ENCODE measurements at regions of chr1 and their contacts with region 1.

Region 1: DNA sequence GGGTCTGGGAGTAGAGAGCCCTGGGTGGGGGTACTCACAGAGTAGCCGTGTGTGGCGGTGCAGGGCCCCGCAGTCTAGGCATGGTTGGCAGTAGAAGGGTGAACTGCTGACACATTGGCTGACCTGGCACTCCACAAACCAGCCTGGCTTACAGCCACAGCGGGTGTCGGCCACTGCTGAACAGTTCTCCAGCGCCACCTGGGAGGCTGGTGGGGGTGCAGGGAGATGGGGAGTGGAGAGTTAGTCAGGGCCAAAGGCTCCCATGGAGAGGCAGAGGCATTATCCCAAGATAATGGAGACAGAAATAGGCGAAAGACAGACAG is 1.5 kb downstream of the TNFRSF25 start:
- DNase-seq: peak in 11 of 14 experiments; percentile 26 to 75 (median 58)
- ATAC-seq: no peak
- H3K4me3 ChIP-seq: peak overlapping the region; percentile 83
- H3K4me3 Mint-ChIP-seq: peak overlapping the region; percentile 98
- H3K27ac ChIP-seq: peak overlapping the region; percentile 90 to 97
- H3K27ac Mint-ChIP-seq: peak overlapping the region; percentile 96
- H3K4me1 ChIP-seq: peaks cover 68% of the 10 kb centered on the region
- H3K4me1 Mint-ChIP-seq: peaks cover 61% of the 10 kb centered on the region
- H3K27me3 ChIP-seq: no peaks in the 10 kb centered on the region
- H3K27me3 Mint-ChIP-seq: no peaks in the 10 kb centered on the region
- CTCF ChIP-seq: no peak

Region 2: GRCh38 chr1:5819391-5820025 is 645.0 kb before region 1 on chr1:
- CTCF ChIA-PET with region 1: no interaction called
- POLR2A ChIA-PET with region 1: no interaction called
- intact Hi-C with region 1: no loop called
- DNase-seq: no peak
- ATAC-seq: no peak
- H3K4me3 ChIP-seq: no peak overlapping the region
- H3K4me3 Mint-ChIP-seq: no peak overlapping the region
- H3K27ac ChIP-seq: no peak overlapping the region
- H3K27ac Mint-ChIP-seq: no peak overlapping the region
- H3K4me1 ChIP-seq: no peaks in the 10 kb centered on the region
- H3K4me1 Mint-ChIP-seq: no peaks in the 10 kb centered on the region
- H3K27me3 ChIP-seq: peaks cover 3 to 5% of the 10 kb centered on the region in 2 experiments
- H3K27me3 Mint-ChIP-seq: peaks cover 48% of the 10 kb centered on the region
- CTCF ChIP-seq: no peak

Region 3: DNA sequence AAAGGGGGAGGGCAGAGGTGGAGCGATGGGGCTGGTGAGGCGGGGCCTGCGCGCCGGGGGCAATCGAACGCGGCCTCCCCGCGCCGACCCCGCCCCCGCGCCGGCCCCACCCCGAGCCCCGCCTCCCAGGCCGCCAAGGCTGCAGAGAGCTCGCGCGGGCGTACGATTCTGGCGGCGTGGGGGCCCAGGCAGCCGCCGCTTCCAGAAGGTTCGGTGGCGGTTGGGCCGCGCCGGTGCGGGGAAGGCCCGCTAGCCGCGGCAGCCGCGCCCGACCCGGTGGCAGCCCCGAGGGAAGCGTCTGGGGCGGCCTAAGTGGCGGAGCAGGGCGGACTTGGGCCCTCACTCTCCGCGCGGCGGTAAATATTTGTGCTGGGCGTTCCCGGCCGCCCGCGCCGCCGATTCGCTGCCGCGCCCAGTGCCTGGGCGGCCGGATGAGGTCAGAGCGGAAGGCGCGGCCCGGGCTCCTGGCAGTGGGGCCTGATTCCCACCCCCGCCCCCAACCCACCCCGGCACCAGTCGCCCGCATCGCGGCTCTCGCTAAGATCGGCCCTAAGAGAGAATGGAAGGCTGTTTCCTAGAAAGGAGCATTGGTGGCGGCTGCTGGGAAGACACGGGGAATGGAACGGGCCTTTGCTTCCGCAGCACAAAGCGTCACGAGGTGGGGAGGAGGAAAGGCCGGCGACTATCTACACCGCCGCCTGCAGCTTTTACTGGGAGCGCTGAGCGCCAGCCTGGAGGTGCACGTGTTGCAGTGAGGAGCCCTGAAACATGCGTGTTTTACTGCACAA is 70.9 kb before region 1 on chr1 and contains the start of gene ACOT7:
- CTCF ChIA-PET with region 1: no interaction called
- POLR2A ChIA-PET with region 1: interaction called, 10 read pairs
- intact Hi-C with region 1: no loop called
- DNase-seq: peak; percentile 84 to 97 (median 90)
- ATAC-seq: peak; percentile 90
- H3K4me3 ChIP-seq: peak within 1 kb of the TSS; percentile 69
- H3K4me3 Mint-ChIP-seq: peak within 1 kb of the TSS; percentile 92
- H3K27ac ChIP-seq: peak within 1 kb of the TSS; percentile 69 to 81
- H3K27ac Mint-ChIP-seq: peak within 1 kb of the TSS; percentile 90
- H3K4me1 ChIP-seq: peaks cover 27% of the 10 kb centered on the region
- H3K4me1 Mint-ChIP-seq: peaks cover 31% of the 10 kb centered on the region
- H3K27me3 ChIP-seq: no peaks in the 10 kb centered on the region
- H3K27me3 Mint-ChIP-seq: no peaks in the 10 kb centered on the region
- CTCF ChIP-seq: no peak
- total RNA-seq, gene ACOT7: 5.3 to 5.4 TPM

Region 4: GRCh38 chr1:6423321-6423999 is 41.0 kb before region 1 on chr1:
- CTCF ChIA-PET with region 1: interaction called, 10 read pairs
- POLR2A ChIA-PET with region 1: interaction called, 9 read pairs
- intact Hi-C with region 1: no loop called
- DNase-seq: peak; percentile 60 to 85 (median 72)
- ATAC-seq: peak; percentile 85
- H3K4me3 ChIP-seq: peak overlapping the region; percentile 33
- H3K4me3 Mint-ChIP-seq: peak overlapping the region; percentile 67
- H3K27ac ChIP-seq: no peak overlapping the region
- H3K27ac Mint-ChIP-seq: no peak overlapping the region
- H3K4me1 ChIP-seq: peaks cover 48% of the 10 kb centered on the region
- H3K4me1 Mint-ChIP-seq: peaks cover 13% of the 10 kb centered on the region
- H3K27me3 ChIP-seq: peaks cover 53 to 69% of the 10 kb centered on the region in 2 experiments
- H3K27me3 Mint-ChIP-seq: peaks cover 55% of the 10 kb centered on the region
- CTCF ChIP-seq: peak; percentile 85

Region 5: GRCh38 chr1:6438047-6438525 is 26.4 kb before region 1 on chr1:
- CTCF ChIA-PET with region 1: interaction called, 11 read pairs
- POLR2A ChIA-PET with region 1: interaction called, 12 read pairs
- intact Hi-C with region 1: no loop called
- DNase-seq: peak; percentile 56 to 85 (median 66)
- ATAC-seq: peak; percentile 65
- H3K4me3 ChIP-seq: no peak overlapping the region
- H3K4me3 Mint-ChIP-seq: peak overlapping the region; percentile 65
- H3K27ac ChIP-seq: no peak overlapping the region
- H3K27ac Mint-ChIP-seq: no peak overlapping the region
- H3K4me1 ChIP-seq: peaks cover 15% of the 10 kb centered on the region
- H3K4me1 Mint-ChIP-seq: peaks cover 9% of the 10 kb centered on the region
- H3K27me3 ChIP-seq: peaks cover 10 to 11% of the 10 kb centered on the region in 2 experiments
- H3K27me3 Mint-ChIP-seq: peaks cover 28% of the 10 kb centered on the region
- CTCF ChIP-seq: peak; percentile 97

Region 6: DNA sequence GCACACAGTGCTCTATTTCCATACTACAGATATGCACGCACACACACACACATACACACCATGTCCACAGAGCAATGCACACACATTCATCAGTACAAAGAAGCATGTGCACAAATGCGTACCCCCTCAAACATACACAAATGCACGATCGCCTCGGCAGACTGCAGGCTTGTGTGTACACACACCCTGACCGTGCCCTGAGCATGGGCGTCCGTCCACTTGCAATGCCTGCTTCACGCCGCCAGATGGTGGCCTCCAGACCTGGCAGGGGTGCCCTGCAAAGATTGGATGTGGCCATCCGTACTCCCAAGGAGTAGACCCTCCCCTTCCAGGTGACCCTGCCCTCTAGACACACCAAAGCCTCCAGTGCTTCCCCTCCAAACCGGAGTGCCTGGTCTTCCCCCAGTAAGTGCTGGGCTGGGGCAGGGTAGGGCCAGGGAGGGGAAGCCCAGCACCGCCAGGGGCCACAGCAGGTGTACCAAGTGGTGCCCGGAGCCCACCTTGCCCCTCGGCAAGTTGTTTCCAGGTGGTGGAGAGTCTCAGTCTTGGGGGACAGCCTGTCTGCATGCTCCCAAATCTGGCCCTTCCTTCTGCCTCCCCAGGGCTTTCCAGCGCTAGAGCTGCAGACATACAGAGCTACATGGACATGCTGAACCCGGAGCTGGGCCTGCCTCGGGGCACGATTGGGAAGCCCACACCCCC is 19.3 kb before region 1 on chr1:
- CTCF ChIA-PET with region 1: interaction called, 34 read pairs
- POLR2A ChIA-PET with region 1: interaction called, 61 read pairs
- intact Hi-C with region 1: no loop called
- DNase-seq: peak in 10 of 14 experiments; percentile 35 to 71 (median 44)
- ATAC-seq: peak; percentile 16
- H3K4me3 ChIP-seq: no peak overlapping the region
- H3K4me3 Mint-ChIP-seq: no peak overlapping the region
- H3K27ac ChIP-seq: no peak overlapping the region
- H3K27ac Mint-ChIP-seq: no peak overlapping the region
- H3K4me1 ChIP-seq: peaks cover 51% of the 10 kb centered on the region
- H3K4me1 Mint-ChIP-seq: peaks cover 27% of the 10 kb centered on the region
- H3K27me3 ChIP-seq: peaks cover 41 to 55% of the 10 kb centered on the region in 2 experiments
- H3K27me3 Mint-ChIP-seq: peaks cover 47% of the 10 kb centered on the region
- CTCF ChIP-seq: peak; percentile 39

Region 7: GRCh38 chr1:6489799-6490180 is 25.3 kb after region 1 on chr1:
- CTCF ChIA-PET with region 1: no interaction called
- POLR2A ChIA-PET with region 1: interaction called, 16 read pairs
- intact Hi-C with region 1: no loop called
- DNase-seq: peak; percentile 59 to 90 (median 72)
- ATAC-seq: peak; percentile 58
- H3K4me3 ChIP-seq: peak overlapping the region; percentile 90
- H3K4me3 Mint-ChIP-seq: peak overlapping the region; percentile 82
- H3K27ac ChIP-seq: no peak overlapping the region
- H3K27ac Mint-ChIP-seq: no peak overlapping the region
- H3K4me1 ChIP-seq: peaks cover 58% of the 10 kb centered on the region
- H3K4me1 Mint-ChIP-seq: peaks cover 30% of the 10 kb centered on the region
- H3K27me3 ChIP-seq: peaks cover 12 to 14% of the 10 kb centered on the region in 2 experiments
- H3K27me3 Mint-ChIP-seq: peaks cover 21% of the 10 kb centered on the region
- CTCF ChIP-seq: peak; percentile 96